ENCODE measurements at regions of chr1 and their contacts with region 1.

Region 1: DNA sequence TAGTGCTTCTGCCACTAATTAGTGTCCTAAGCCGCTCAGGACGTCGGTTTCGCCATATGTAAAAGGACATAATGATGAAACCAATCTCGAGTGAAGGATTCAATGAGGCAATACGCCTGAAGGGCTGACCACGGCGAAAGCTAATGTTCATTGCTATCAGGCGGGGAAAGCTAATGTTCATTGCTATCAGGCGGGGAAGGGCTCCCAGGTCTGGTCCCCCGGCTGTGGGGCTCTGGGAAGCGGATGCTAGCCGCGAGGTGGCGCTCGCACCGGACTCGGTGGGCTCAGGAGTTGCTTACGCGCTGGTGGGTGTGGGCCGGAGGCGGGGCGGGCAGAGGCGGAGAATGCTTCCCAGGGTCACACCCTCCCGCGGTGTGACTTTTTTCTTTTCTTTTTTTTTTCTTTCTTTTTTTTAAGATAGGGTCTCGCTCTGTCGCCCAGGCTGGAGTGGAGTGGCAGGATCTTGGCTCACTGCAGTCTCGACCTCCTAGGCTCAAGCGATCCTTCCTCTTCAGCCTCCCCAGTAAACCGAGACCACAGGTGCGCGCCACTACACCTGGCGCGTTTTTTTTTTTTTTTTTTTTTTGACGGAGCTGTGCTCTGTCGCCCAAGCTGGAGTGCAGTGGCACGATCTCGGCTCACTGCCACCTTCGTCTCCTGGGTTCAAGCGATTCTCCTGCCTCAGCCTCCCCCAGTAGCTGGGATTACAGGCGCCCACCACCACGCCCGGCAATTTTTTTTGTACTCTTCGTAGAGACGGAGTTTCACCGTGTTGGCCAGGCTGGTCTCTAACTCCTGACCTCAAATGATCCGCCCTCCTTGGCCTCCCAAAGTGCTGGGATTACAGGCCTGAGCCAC is 1.1 kb upstream of the PEAR1 start:
- DNase-seq: peak; percentile 91 to 95
- H3K4me3 ChIP-seq: no peak overlapping the region; the same call in 1 of the 2 replicates
- H3K4me3 Mint-ChIP-seq: peak overlapping the region; percentile 59
- H3K27ac Mint-ChIP-seq: no peak overlapping the region
- H3K4me1 ChIP-seq: peaks cover 38% of the 10 kb centered on the region
- H3K4me1 Mint-ChIP-seq: peaks cover 23% of the 10 kb centered on the region
- H3K27me3 ChIP-seq: no peaks in the 10 kb centered on the region
- H3K27me3 Mint-ChIP-seq: peaks cover 12% of the 10 kb centered on the region
- CTCF ChIP-seq: peak; percentile 83 to 89

Region 2: GRCh38 chr1:155591770-155592169 is 1300.6 kb before region 1 on chr1:
- CTCF ChIA-PET with region 1: no interaction called
- POLR2A ChIA-PET with region 1: no interaction called
- intact Hi-C with region 1: no loop called
- DNase-seq: peak in 1 of 2 experiments; percentile 45
- H3K4me3 ChIP-seq: no peak overlapping the region
- H3K4me3 Mint-ChIP-seq: no peak overlapping the region
- H3K27ac Mint-ChIP-seq: no peak overlapping the region
- H3K4me1 ChIP-seq: no peaks in the 10 kb centered on the region
- H3K4me1 Mint-ChIP-seq: no peaks in the 10 kb centered on the region
- H3K27me3 ChIP-seq: no peaks in the 10 kb centered on the region
- H3K27me3 Mint-ChIP-seq: no peaks in the 10 kb centered on the region
- CTCF ChIP-seq: peak; percentile 41 to 50

Region 3: DNA sequence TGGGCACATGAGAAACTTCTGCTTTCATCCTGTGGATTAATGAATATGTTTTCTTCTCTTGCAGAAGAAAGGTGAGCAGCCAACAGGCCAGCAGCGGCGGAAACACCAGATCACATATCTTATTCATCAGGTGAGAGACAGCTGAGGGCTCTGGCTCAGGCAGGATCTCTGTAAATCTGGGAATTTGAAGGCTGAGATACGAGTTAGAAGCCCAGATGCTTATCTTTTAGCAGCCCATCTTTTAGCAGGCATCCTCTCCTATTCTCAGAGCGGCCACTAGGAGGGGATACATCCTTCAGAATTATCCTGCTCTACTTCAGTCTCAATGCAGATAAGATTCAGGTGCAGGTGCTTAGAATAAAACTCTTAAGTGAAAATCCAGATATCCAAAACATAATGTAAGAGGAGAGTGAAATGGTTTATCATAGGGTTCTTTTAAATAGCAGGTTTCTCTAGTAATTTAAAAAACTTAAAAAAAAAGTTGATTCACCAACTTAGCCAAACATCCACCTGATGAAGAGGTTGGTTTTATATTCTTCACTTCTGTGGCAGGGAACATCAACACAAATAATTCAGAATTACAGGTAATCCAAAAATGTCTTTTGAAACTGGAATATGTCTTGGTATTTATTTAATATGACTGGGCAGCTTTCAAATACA is 95.1 kb before region 1 on chr1:
- CTCF ChIA-PET with region 1: interaction called, 5 read pairs
- POLR2A ChIA-PET with region 1: no interaction called
- intact Hi-C with region 1: loop called (anchors 1 kb)
- DNase-seq: peak; percentile 53 to 68
- H3K4me3 ChIP-seq: no peak overlapping the region
- H3K4me3 Mint-ChIP-seq: no peak overlapping the region
- H3K27ac Mint-ChIP-seq: no peak overlapping the region
- H3K4me1 ChIP-seq: no peaks in the 10 kb centered on the region
- H3K4me1 Mint-ChIP-seq: no peaks in the 10 kb centered on the region
- H3K27me3 ChIP-seq: no peaks in the 10 kb centered on the region
- H3K27me3 Mint-ChIP-seq: no peaks in the 10 kb centered on the region
- CTCF ChIP-seq: peak; percentile 72 to 81

Region 4: GRCh38 chr1:156838981-156839410 is 53.4 kb before region 1 on chr1:
- CTCF ChIA-PET with region 1: interaction called, 7 read pairs
- POLR2A ChIA-PET with region 1: no interaction called
- intact Hi-C with region 1: loop called (anchors 1 kb)
- DNase-seq: peak in 1 of 2 experiments; percentile 49
- H3K4me3 ChIP-seq: no peak overlapping the region
- H3K4me3 Mint-ChIP-seq: no peak overlapping the region
- H3K27ac Mint-ChIP-seq: no peak overlapping the region
- H3K4me1 ChIP-seq: no peaks in the 10 kb centered on the region
- H3K4me1 Mint-ChIP-seq: no peaks in the 10 kb centered on the region
- H3K27me3 ChIP-seq: no peaks in the 10 kb centered on the region; the same call in 1 of the 2 replicates
- H3K27me3 Mint-ChIP-seq: peaks cover 30% of the 10 kb centered on the region
- CTCF ChIP-seq: peak; percentile 70 to 93

Region 5: GRCh38 chr1:156936721-156937220 is 44.4 kb after region 1 on chr1:
- CTCF ChIA-PET with region 1: no interaction called
- POLR2A ChIA-PET with region 1: no interaction called
- intact Hi-C with region 1: no loop called
- DNase-seq: no peak
- H3K4me3 ChIP-seq: no peak overlapping the region
- H3K4me3 Mint-ChIP-seq: no peak overlapping the region
- H3K27ac Mint-ChIP-seq: no peak overlapping the region
- H3K4me1 ChIP-seq: no peaks in the 10 kb centered on the region
- H3K4me1 Mint-ChIP-seq: no peaks in the 10 kb centered on the region
- H3K27me3 ChIP-seq: no peaks in the 10 kb centered on the region
- H3K27me3 Mint-ChIP-seq: no peaks in the 10 kb centered on the region
- CTCF ChIP-seq: no peak

Region 6: GRCh38 chr1:157090196-157090647 is 197.8 kb after region 1 on chr1:
- CTCF ChIA-PET with region 1: no interaction called
- POLR2A ChIA-PET with region 1: no interaction called
- intact Hi-C with region 1: no loop called
- DNase-seq: peak; percentile 83 to 90
- H3K4me3 ChIP-seq: no peak overlapping the region
- H3K4me3 Mint-ChIP-seq: no peak overlapping the region
- H3K27ac Mint-ChIP-seq: peak overlapping the region; percentile 22
- H3K4me1 ChIP-seq: no peaks in the 10 kb centered on the region
- H3K4me1 Mint-ChIP-seq: no peaks in the 10 kb centered on the region
- H3K27me3 ChIP-seq: no peaks in the 10 kb centered on the region
- H3K27me3 Mint-ChIP-seq: no peaks in the 10 kb centered on the region
- CTCF ChIP-seq: peak; percentile 89

Region 7: GRCh38 chr1:157312082-157312812 is 419.8 kb after region 1 on chr1:
- CTCF ChIA-PET with region 1: no interaction called
- POLR2A ChIA-PET with region 1: no interaction called
- intact Hi-C with region 1: no loop called
- DNase-seq: no peak
- H3K4me3 ChIP-seq: no peak overlapping the region
- H3K4me3 Mint-ChIP-seq: no peak overlapping the region
- H3K27ac Mint-ChIP-seq: no peak overlapping the region
- H3K4me1 ChIP-seq: no peaks in the 10 kb centered on the region; the same call in 1 of the 2 replicates
- H3K4me1 Mint-ChIP-seq: peaks cover 12% of the 10 kb centered on the region
- H3K27me3 ChIP-seq: no peaks in the 10 kb centered on the region
- H3K27me3 Mint-ChIP-seq: no peaks in the 10 kb centered on the region
- CTCF ChIP-seq: no peak